Activated CD4-positive, alpha-beta memory T cell treated with anti-CD3 and anti-CD28 coated beads, Interleukin-2, amount 10 ng/mL, durations not matched to agents 7 days and 5 days (primary cell): ENCODE measurements at regions of chr3 and their contacts with region 1.

Region 1: DNA sequence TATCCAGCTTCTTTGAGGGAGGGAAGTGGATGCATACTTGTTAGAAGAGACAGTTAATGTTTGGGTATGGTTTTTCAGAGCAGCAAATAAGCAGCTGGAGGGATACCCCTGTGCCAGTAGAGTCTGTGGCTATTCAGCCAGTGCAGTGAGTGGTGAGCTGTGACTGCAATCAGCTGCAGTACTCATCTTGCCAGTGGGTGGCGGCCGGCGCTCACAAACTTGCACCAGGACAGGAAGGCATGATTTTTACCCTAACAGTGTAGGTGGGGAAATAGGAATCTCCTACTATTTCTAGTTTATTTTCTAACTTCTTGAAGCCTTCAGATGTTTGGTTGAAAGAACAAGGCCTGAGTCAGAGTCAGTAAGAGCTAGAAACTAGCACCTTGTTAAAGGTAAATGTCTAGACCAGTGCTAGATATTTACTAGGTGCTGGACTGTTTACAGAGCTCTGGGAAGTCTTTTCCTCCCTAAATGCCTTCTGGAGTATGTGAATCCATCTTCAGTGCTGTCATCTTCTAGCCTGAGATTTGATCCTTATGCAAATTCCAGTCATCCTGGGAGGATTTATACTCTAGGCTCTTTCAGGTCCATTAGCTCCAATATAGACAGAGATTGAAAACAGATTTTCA is 23.6 kb downstream of the TIMP4 start:
- DNase-seq: peak; percentile 71
- H3K4me3 Mint-ChIP-seq: no peak overlapping the region
- H3K27ac Mint-ChIP-seq: no peak overlapping the region
- H3K4me1 Mint-ChIP-seq: peaks cover 2% of the 10 kb centered on the region
- H3K27me3 Mint-ChIP-seq: peaks cover 30% of the 10 kb centered on the region

Region 2: DNA sequence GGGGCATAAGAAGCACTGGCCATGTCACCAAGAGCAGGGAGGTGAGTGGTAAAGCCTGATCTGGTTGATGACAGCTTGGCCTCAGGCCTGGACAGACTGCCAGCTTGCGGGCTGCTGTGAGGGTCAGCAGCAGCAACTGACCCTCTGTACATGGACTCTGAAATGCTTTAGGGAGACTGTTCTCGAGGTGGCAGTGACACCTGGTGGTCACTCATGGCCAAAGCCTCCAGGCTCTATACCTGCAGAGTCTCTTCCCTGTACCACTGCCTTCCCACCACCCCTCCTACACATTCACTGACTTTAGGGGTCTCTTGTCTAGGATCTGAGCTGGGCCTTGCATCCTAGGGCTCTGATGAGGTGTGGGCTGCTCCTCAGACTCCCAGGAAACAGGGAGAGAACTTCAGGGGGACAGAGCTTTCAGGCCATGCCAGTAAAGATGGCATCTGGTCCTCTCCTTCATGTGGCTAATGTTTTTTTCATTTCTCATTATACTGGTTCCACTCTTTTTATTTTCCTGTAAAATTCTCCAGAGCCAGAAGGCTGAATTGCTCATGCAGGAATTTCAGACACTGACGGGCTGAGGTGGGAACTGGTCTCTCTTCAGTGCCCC is 40.8 kb after region 1 on chr3:
- CTCF ChIA-PET with region 1: interaction called, 44 read pairs
- POLR2A ChIA-PET with region 1: no interaction called
- DNase-seq: peak; percentile 43
- H3K4me3 Mint-ChIP-seq: no peak overlapping the region
- H3K27ac Mint-ChIP-seq: no peak overlapping the region
- H3K4me1 Mint-ChIP-seq: peaks cover 8% of the 10 kb centered on the region
- H3K27me3 Mint-ChIP-seq: no peaks in the 10 kb centered on the region

Region 3: DNA sequence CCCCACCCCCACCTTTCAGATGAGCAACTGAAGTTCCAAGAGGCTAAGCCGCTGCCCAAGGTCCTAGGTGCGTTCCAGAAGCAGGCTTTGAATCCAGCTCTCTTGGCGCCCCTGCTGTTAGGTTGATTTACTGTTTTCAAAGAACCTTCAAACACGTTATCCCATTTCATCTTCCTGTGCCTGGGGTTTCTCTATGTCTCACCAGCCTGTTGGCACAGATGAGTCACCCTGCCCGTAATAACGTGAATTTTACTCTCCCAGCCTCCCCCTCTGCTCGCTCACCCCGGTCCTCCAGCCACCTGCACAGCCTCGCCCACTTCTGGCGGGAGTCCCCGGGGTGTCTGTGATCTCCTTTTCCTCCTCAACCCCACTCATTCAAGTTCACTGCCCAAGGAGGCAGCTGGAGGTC is 336.1 kb after region 1 on chr3:
- CTCF ChIA-PET with region 1: interaction called, 129 read pairs
- POLR2A ChIA-PET with region 1: no interaction called
- DNase-seq: peak; percentile 64
- H3K4me3 Mint-ChIP-seq: peak overlapping the region; percentile 8
- H3K27ac Mint-ChIP-seq: peak overlapping the region; percentile 69
- H3K4me1 Mint-ChIP-seq: peaks cover 45% of the 10 kb centered on the region
- H3K27me3 Mint-ChIP-seq: no peaks in the 10 kb centered on the region